ENCODE measurements at regions of chr4 and their contacts with region 1.

Region 1: GRCh38 chr4:82360298-82361177 is 13.3 kb downstream of the HNRNPD start:
- DNase-seq: no peak
- ATAC-seq: peak; percentile 42
- H3K4me3 Mint-ChIP-seq: no peak overlapping the region
- H3K27ac Mint-ChIP-seq: no peak overlapping the region
- H3K4me1 Mint-ChIP-seq: peaks cover 79% of the 10 kb centered on the region
- H3K27me3 Mint-ChIP-seq: no peaks in the 10 kb centered on the region

Region 2: GRCh38 chr4:82284858-82285805 is 75.4 kb before region 1 on chr4:
- CTCF ChIA-PET with region 1: interaction called, 10 read pairs
- POLR2A ChIA-PET with region 1: interaction called, 3 read pairs
- intact Hi-C with region 1: no loop called
- DNase-seq: peak; percentile 100
- ATAC-seq: peak; percentile 99
- H3K4me3 Mint-ChIP-seq: peak overlapping the region; percentile 68
- H3K27ac Mint-ChIP-seq: peak overlapping the region; percentile 62
- H3K4me1 Mint-ChIP-seq: peaks cover 13% of the 10 kb centered on the region
- H3K27me3 Mint-ChIP-seq: no peaks in the 10 kb centered on the region

Region 3: DNA sequence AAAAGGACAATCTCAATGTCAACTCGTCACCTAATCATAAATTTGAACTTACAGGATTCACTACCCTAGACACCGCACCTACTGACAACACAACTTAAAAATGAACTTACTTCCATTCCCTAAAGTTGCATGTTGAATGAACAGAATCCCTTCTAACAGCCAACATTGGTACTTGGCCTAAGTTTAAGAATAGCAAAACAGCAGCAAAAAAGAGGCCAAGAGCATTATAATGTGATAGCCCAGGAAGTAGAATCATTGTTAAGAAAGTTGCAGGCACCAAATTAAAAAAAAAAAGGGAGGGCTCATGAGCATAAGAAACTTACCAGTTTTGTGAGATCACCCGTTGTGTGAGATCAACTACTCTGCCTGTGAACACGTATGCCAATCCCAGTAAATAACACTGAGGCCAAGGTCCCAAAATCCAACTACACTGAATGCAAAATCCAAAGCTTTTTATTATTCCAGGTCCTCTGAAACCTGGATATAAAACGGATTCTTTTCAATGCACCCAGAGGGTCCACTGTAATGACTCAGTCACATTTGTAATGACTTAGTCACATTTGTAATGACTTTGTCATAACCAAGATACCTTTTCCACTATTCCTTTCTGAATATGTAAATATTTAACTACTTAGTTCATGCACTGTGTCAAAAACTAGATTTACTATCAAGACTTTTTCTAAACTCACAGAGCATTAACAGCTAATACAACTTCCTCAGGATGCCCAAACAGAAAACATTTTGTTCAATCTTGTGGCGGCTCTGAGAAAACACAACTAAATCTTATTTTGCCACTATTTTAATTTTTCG is 62.9 kb after region 1 on chr4:
- CTCF ChIA-PET with region 1: interaction called, 10 read pairs
- POLR2A ChIA-PET with region 1: interaction called, 5 read pairs
- intact Hi-C with region 1: no loop called
- DNase-seq: no peak
- ATAC-seq: peak; percentile 59
- H3K4me3 Mint-ChIP-seq: no peak overlapping the region
- H3K27ac Mint-ChIP-seq: peak overlapping the region; percentile 72
- H3K4me1 Mint-ChIP-seq: peaks cover 34% of the 10 kb centered on the region
- H3K27me3 Mint-ChIP-seq: no peaks in the 10 kb centered on the region

Region 4: DNA sequence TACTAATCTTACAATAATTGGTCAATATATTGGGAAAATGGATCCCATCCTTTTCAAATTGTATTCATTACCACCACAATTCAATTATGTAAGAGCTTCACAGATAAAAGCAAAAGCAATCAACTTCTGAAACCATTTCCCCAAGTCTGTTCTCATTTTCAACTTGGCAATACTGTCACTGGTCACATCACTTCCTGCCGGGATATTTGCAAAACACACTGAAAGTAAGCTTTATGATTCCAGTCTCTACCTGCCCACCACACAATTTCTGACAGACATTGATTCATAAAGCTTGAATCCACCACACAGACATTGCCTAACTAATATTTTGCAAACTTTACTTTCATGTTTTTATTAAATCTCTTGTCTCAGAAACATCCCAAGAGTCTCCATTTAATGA is 596.5 kb after region 1 on chr4:
- CTCF ChIA-PET with region 1: no interaction called
- POLR2A ChIA-PET with region 1: no interaction called
- intact Hi-C with region 1: no loop called
- DNase-seq: no peak
- ATAC-seq: peak; percentile 47
- H3K4me3 Mint-ChIP-seq: no peak overlapping the region
- H3K27ac Mint-ChIP-seq: no peak overlapping the region
- H3K4me1 Mint-ChIP-seq: peaks cover 10% of the 10 kb centered on the region
- H3K27me3 Mint-ChIP-seq: no peaks in the 10 kb centered on the region

Measured in activated CD4-positive, alpha-beta T cell treated with anti-CD3 and anti-CD28 coated beads for 36 hours (primary cell).